B cell (primary cell): ENCODE measurements at regions of chr9 and their contacts with region 1.

Region 1: DNA sequence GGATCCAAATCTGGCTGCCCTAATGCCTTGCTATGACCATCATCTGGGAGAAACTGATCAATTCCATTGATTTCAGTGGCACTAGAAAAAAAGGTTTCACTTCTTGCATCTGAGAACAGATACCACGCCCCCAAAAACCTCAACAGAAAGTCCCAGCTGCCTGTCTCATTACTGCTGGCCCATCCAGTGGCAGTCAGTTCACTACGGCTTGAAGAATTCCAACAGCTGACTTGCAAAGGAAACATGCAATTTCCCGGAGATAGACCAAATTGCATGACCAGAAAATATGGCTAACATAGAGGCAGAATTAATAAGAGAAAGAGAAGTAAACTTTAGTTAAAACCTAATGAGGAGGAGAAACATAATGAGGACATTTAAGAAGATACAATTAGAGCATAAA is 48.6 kb downstream of the UGCG start:
- DNase-seq: peak; percentile 64
- ATAC-seq: peak; percentile 86
- H3K4me3 ChIP-seq: peak overlapping the region in 1 of 5 experiments; percentile 27
- H3K4me3 Mint-ChIP-seq: peak overlapping the region; percentile 73
- H3K27ac ChIP-seq: no peak overlapping the region
- H3K27ac Mint-ChIP-seq: peak overlapping the region; percentile 67
- H3K4me1 ChIP-seq: peaks cover 29 to 38% of the 10 kb centered on the region in 2 donors
- H3K4me1 Mint-ChIP-seq: peaks cover 40% of the 10 kb centered on the region
- H3K27me3 ChIP-seq: no peaks in the 10 kb centered on the region
- H3K27me3 Mint-ChIP-seq: no peaks in the 10 kb centered on the region
- CTCF ChIP-seq: no peak

Region 2: DNA sequence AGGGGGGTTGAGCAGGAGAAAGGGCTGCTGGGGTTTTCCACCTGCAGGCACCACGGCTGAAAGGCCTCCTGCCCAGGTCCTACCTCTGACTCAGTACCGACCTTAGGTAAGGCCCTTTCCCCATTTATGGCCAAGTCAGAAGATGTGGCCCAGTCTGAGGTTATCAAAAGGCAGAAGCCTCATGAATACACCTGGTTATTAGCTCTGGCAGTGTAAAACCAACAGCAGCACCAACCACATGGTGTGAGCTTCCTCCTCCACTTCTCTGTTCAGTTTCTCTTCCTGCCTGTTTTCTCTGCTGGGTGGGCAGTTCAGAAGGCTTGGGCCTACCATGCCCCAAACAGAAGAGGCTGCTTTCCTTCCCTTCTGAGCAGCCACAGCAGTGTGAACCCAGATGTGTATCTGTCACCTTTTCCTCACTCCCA is 38.3 kb after region 1 on chr9:
- CTCF ChIA-PET with region 1: no interaction called
- POLR2A ChIA-PET with region 1: no interaction called
- intact Hi-C with region 1: no loop called
- DNase-seq: peak; percentile 83
- ATAC-seq: peak; percentile 87
- H3K4me3 ChIP-seq: no peak overlapping the region
- H3K4me3 Mint-ChIP-seq: peak overlapping the region; percentile 44
- H3K27ac ChIP-seq: peak overlapping the region; percentile 70 to 85
- H3K27ac Mint-ChIP-seq: peak overlapping the region; percentile 95
- H3K4me1 ChIP-seq: peaks cover 45 to 54% of the 10 kb centered on the region in 2 donors
- H3K4me1 Mint-ChIP-seq: peaks cover 57% of the 10 kb centered on the region
- H3K27me3 ChIP-seq: no peaks in the 10 kb centered on the region
- H3K27me3 Mint-ChIP-seq: no peaks in the 10 kb centered on the region
- CTCF ChIP-seq: no peak

Region 3: GRCh38 chr9:112050544-112051475 is 105.6 kb after region 1 on chr9:
- CTCF ChIA-PET with region 1: no interaction called
- POLR2A ChIA-PET with region 1: interaction called, 13 read pairs
- intact Hi-C with region 1: no loop called
- DNase-seq: no peak
- ATAC-seq: no peak
- H3K4me3 ChIP-seq: no peak overlapping the region
- H3K4me3 Mint-ChIP-seq: no peak overlapping the region
- H3K27ac ChIP-seq: no peak overlapping the region
- H3K27ac Mint-ChIP-seq: no peak overlapping the region
- H3K4me1 ChIP-seq: peaks cover 26 to 32% of the 10 kb centered on the region in 2 donors
- H3K4me1 Mint-ChIP-seq: peaks cover 48% of the 10 kb centered on the region
- H3K27me3 ChIP-seq: no peaks in the 10 kb centered on the region
- H3K27me3 Mint-ChIP-seq: no peaks in the 10 kb centered on the region
- CTCF ChIP-seq: no peak